Motor neuron (in vitro differentiated cells): ENCODE measurements at regions of chr11 and their contacts with region 1.

Region 1: DNA sequence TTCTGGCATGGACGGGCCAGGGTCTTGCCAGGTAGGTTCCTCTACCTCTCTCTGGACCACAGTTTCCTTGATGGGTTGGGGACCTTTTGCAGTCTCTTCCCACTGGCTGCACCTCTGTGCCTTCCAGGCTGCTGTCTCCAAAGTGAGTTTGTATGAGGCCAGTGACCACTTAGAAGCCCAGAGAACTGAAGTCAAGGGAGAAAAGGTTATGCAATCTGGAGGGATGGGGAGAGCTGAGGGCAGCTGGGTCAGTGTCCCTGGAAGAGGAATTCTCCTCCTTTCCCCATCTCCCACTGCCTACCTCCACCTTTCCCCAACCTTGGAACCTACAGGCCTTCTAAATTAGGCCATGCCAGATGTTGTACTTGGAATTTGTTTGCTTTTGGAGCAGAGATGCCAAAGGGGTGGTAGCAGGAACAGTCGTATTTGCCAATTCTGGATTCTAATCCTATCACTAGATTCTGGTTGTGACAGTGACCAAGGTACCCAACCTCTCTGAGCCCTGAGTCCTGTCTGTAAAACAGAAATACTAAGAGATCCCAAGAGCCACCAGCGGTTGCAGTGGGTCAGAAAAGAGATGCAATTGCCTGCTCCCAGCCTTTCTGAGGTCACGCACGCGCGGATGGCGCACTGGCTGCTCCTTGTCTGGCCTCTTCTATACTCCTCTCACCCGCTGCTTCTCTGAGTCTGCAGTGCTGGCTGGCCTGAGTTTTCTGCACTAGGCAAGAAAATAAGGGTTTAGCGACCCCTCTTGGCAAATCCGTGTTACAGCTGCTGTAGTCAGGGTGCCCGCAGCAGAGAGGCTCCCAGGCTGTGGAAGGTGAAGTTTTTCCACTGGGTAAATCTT is 10.7 kb upstream of the ACCSL start:
- ATAC-seq: peak; percentile 88 to 100 (median 99)
- H3K4me3 ChIP-seq: no peak overlapping the region
- H3K27ac ChIP-seq: no peak overlapping the region
- H3K4me1 ChIP-seq: peaks cover 4% of the 10 kb centered on the region in 2 donors

Region 2: GRCh38 chr11:43852057-43852636 is 184.9 kb before region 1 on chr11:
- in situ Hi-C with region 1: no loop called
- ATAC-seq: peak; percentile 70 to 88 (median 83)
- H3K4me3 ChIP-seq: no peak overlapping the region
- H3K27ac ChIP-seq: no peak overlapping the region
- H3K4me1 ChIP-seq: no peaks in the 10 kb centered on the region

Region 3: GRCh38 chr11:43895601-43896000 is 141.4 kb before region 1 on chr11:
- in situ Hi-C with region 1: loop called in 6 of 9 experiments (anchors 10 to 25 kb)
- ATAC-seq: no peak
- H3K4me3 ChIP-seq: no peak overlapping the region
- H3K27ac ChIP-seq: no peak overlapping the region
- H3K4me1 ChIP-seq: no peaks in the 10 kb centered on the region

Region 4: DNA sequence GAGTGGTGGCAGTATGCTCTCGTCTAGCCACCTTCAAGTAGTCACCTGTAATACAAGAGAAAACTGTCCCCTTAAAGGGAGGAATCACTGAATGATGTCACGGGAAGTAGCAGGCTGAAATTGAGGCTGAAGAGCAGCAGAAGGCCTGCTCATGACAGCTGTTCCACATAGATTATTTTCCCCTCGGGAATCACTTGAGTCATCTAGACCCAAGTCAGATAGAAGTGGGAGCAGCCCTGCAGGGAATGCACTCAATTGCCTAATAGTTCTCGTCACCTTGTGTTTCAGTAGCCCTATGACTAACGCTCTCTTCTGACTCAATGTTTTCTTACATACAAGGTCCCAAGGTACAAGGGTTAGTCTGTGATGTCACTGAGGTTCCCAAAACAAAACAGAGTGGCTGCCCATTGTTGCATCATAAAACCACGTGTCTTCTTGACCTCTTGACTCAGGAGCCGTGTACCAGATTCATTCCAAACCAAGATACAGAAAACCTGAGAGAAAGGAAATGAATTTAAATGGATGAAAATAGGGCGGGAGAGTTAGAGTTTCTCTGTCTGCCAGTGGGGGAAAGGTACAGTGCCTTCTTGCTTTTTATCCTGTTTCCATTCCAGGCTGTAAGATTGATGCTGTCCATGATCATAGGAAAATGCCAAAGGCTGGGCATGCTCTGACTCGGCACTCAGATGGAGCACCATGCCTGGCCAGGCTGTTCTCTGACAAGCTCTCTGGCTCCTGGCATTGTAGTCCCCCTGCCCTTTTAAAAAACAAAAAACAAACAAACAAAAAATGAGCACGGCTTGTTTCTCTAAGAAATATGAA is 116.2 kb before region 1 on chr11:
- in situ Hi-C with region 1: loop called in 3 of 9 experiments (anchors 25 kb)
- ATAC-seq: peak; percentile 56 to 85 (median 78)
- H3K4me3 ChIP-seq: no peak overlapping the region
- H3K27ac ChIP-seq: peak overlapping the region; percentile 79 to 83
- H3K4me1 ChIP-seq: peaks cover 60% of the 10 kb centered on the region in 2 donors